ENCODE measurements at regions of chr13 and their contacts with region 1.

Region 1: DNA sequence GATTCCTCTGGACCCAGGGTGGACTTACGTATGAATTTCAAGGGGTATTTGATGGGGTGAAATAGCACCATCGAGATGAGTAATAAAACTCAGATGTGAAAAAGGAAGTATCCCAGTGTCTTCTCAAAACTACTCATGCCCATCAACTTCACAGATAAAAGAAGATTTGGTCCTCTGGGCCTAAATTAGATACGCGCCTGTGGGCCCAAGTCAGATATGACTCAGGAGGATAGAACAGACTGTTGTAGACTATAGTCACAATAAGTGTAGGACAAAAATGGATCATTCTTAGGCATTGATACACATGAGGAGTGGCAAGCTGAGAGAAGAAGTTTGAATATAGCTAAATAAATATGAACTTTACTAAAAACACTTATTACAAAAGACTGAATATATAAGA is 2438.8 kb downstream of the PCDH9 start:
- DNase-seq: no peak
- ATAC-seq: no peak

Region 2: DNA sequence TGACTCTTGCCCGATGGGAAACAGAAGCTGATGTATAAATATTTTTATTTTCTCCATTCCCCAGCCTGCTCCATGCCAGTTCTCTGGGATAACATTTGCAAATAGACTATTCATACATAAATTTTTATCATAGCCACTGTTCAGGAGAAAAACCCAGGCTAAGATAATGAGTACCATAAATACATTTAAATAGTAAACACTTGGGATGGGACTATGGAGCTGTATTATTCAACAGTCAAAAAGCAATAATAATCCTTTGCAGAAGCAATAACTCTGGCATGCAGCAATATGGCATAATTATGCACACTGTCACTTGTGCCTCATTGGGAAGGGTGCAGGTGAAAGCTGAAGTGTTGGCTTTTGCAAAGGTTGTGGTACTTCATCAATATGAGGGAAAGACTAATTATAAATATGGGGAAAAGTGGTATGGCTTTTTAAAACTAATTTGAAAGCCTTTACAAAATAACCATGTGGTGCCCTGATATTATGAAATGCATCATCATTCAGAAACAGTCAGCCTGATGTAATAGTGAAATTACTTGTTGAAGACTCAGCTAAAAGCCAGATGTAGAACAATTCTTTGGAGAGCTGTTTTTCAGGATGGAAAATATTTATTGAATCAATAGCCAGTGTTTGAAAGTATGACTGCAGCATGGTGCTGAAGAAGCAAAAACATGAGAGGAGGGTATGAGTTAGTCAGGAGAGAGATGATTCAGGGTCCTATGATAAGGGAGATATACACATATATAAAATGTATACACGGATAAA is 38.0 kb before region 1 on chr13:
- intact Hi-C with region 1: loop called (anchors 2 kb)
- DNase-seq: no peak
- ATAC-seq: no peak